GM10248 (cell line): ENCODE measurements at regions of chr20 and their contacts with region 1.

Region 1: DNA sequence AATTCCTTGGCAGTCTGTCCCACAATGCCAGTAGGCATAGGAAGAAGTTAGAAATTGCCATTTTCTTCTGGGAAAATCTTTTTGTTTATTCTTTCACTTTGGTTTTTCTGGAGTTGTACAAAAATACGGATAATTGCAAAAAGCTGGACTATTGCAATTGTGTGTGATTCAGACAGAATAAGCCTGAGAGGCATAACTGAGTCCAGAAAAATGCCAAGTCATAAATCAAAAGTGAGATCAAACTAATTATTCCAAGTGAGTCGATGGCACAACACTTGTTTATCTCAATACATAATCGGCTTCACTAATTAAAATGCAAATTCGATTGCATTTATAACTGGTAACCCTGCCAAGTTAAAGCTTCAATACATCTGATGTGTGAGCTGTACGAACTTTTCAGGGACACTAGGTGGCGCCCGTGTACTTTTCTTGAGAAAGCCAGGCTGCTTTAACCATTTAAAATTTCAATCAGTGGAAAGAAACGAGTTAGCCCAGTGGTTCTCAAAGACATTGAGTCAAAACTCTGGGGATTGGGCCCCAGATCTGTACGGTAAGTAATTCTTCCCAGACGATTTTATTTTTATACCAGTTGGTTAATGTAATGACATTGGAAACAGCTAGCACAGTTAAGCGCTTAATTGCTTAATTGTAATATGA is 102.6 kb downstream of the LAMP5 start:
- DNase-seq: peak; percentile 52
- CTCF ChIP-seq: peak; percentile 68

Region 2: DNA sequence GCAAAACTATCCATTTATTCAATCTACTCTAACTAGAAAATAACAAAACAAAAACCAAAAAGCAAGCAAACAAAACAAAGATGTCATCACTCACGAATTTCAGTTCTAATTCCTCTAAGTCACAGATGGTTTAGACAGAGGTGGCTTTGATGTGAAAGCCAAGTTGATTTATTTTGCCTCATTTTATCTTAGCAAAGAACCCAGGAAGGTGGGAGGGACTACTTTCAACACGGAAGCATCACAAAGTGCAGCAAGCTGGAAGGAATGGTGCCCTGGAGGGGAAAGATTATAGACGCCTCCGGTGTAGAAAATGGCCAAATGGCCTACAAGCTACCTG is 14.1 kb before region 1 on chr20:
- CTCF ChIA-PET with region 1: interaction called, 16 read pairs
- POLR2A ChIA-PET with region 1: no interaction called
- DNase-seq: no peak
- CTCF ChIP-seq: no peak

Region 3: DNA sequence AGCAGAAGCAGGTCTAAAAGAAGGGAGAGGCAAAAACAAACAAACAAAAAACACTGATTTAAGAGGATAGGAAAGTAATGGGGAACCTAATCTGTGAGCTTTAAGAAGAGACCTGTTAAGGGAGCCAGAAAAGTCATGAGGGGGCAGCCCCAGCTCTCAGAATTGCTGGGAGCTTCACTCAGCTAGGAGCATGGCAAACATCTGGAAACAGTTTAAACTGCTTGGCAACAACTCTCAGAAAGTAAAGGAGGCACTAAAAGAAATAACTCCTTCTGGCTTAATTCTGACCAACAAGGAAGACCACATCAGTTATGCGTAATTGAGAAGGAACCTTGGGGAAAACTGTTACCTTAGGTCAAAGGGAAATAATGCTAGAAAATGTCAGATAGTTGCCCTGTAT is 18.8 kb after region 1 on chr20:
- CTCF ChIA-PET with region 1: interaction called, 10 read pairs
- POLR2A ChIA-PET with region 1: no interaction called
- DNase-seq: no peak
- CTCF ChIP-seq: no peak

Region 4: GRCh38 chr20:9912858-9913434 is 296.0 kb after region 1 on chr20:
- CTCF ChIA-PET with region 1: interaction called, 62 read pairs
- POLR2A ChIA-PET with region 1: no interaction called
- DNase-seq: peak; percentile 24
- CTCF ChIP-seq: peak; percentile 92

Region 5: GRCh38 chr20:9978397-9979004 is 361.5 kb after region 1 on chr20:
- CTCF ChIA-PET with region 1: interaction called, 12 read pairs
- POLR2A ChIA-PET with region 1: no interaction called
- DNase-seq: peak; percentile 50
- CTCF ChIP-seq: peak; percentile 81

Region 6: GRCh38 chr20:10090588-10091166 is 473.7 kb after region 1 on chr20:
- CTCF ChIA-PET with region 1: interaction called, 26 read pairs
- POLR2A ChIA-PET with region 1: no interaction called
- DNase-seq: peak; percentile 26
- CTCF ChIP-seq: peak; percentile 57

Region 7: GRCh38 chr20:10427060-10427692 is 810.2 kb after region 1 on chr20:
- CTCF ChIA-PET with region 1: interaction called, 17 read pairs
- POLR2A ChIA-PET with region 1: no interaction called
- DNase-seq: peak; percentile 31
- CTCF ChIP-seq: peak; percentile 76